MCF 10A (cell line): ENCODE measurements at regions of chr20 and their contacts with region 1.

Region 1: GRCh38 chr20:48620519-48621254 is 207.1 kb downstream of the PREX1 start:
- DNase-seq: peak; percentile 90
- H3K4me3 Mint-ChIP-seq: peak overlapping the region; percentile 67
- H3K27ac Mint-ChIP-seq: peak overlapping the region; percentile 18
- H3K4me1 Mint-ChIP-seq: peaks cover 23% of the 10 kb centered on the region
- H3K27me3 Mint-ChIP-seq: no peaks in the 10 kb centered on the region
- CTCF ChIP-seq: peak; percentile 94

Region 2: GRCh38 chr20:47677635-47678453 is 942.8 kb before region 1 on chr20:
- CTCF ChIA-PET with region 1: interaction called, 97 read pairs
- POLR2A ChIA-PET with region 1: interaction called, 4 read pairs
- intact Hi-C with region 1: loop called (anchors 1 kb)
- DNase-seq: peak; percentile 60
- H3K4me3 Mint-ChIP-seq: no peak overlapping the region
- H3K27ac Mint-ChIP-seq: no peak overlapping the region
- H3K4me1 Mint-ChIP-seq: no peaks in the 10 kb centered on the region
- H3K27me3 Mint-ChIP-seq: no peaks in the 10 kb centered on the region
- CTCF ChIP-seq: peak; percentile 95

Region 3: DNA sequence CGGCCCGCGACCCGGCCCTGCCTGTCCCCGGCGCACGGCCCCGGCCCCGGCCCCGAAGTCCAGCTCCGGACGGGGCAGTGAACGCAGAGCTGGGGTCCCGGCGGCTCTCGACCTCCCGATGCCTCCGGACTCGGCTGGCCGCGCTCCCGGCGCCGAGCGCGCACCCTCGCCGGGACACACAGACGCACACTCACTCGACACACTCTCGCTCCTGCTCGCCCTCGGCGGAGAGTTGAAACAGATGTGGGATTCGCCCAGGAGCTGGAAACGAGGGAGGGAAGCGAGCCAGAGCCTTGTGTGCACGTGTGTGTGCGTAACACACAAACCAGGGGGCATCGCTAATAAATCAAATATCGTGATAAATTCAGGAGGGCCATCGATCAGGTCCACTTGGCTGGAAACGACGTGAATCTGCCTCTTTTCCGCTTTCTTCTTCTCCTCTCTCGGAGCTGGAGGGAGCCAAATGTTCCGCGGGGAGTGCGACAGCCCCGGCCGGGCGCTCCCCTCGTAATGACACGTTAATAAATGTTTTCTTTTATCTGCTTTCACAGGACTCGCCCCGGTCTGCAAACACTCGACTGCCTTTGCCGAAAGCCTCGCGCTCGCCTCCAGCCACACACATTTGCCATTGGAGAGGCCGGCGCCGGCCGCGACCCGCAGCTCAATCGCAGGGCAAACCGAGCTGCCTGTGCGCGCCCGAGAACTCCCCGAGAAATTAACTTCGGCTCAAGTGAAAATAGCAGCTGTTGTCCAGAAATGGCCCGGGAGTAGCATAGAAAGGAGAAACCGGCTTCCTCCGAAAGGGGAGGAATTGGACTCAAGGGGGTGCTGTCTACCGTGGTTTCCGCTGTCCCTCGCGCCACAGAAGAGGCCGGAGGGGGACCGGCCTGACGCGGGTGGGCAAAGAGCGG is 834.6 kb before region 1 on chr20:
- CTCF ChIA-PET with region 1: interaction called, 61 read pairs
- POLR2A ChIA-PET with region 1: interaction called, 32 read pairs
- intact Hi-C with region 1: loop called (anchors 1 kb)
- DNase-seq: peak; percentile 83
- H3K4me3 Mint-ChIP-seq: peak overlapping the region; percentile 72
- H3K27ac Mint-ChIP-seq: peak overlapping the region; percentile 55
- H3K4me1 Mint-ChIP-seq: peaks cover 52% of the 10 kb centered on the region
- H3K27me3 Mint-ChIP-seq: no peaks in the 10 kb centered on the region
- CTCF ChIP-seq: peak; percentile 92

Region 4: DNA sequence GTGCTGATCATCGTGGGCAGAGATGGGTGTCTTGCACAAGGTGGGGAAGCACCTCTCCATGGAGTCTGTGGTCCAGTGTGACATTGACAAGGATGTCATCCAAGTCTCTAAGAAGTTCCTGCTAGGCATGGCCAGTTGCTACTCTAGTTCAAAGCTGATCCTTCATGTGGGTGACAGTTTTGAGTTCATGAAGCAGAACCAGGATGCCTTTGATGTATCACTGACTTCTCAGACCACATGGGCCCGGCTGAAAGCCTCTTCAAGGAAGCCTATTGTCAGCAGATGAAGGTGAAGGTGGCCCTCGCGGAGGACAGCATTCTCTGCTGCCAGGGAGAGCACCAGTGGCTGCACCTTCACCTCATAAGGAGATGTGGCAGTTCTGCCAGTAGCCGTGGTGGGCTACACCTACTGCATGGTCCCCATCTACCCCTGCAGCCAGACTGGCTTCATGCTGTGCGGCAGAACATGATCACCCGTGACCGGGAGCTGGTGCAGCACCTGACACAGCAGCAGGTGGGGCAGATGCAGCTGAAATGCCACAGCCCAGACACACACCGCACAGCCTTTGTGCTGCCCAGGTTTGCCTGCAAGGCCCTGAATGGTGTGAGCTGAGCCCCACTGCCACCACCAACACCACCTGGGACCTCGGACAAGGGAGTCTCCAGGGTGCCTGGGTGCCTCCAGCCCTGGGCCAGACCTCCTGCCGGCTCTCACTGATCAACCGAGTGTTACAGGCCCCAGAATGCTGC is 760.5 kb before region 1 on chr20:
- CTCF ChIA-PET with region 1: interaction called, 12 read pairs
- POLR2A ChIA-PET with region 1: interaction called, 6 read pairs
- intact Hi-C with region 1: loop called (anchors 2 kb)
- DNase-seq: no peak
- H3K4me3 Mint-ChIP-seq: no peak overlapping the region
- H3K27ac Mint-ChIP-seq: no peak overlapping the region
- H3K4me1 Mint-ChIP-seq: peaks cover 13% of the 10 kb centered on the region
- H3K27me3 Mint-ChIP-seq: no peaks in the 10 kb centered on the region
- CTCF ChIP-seq: no peak

Region 5: DNA sequence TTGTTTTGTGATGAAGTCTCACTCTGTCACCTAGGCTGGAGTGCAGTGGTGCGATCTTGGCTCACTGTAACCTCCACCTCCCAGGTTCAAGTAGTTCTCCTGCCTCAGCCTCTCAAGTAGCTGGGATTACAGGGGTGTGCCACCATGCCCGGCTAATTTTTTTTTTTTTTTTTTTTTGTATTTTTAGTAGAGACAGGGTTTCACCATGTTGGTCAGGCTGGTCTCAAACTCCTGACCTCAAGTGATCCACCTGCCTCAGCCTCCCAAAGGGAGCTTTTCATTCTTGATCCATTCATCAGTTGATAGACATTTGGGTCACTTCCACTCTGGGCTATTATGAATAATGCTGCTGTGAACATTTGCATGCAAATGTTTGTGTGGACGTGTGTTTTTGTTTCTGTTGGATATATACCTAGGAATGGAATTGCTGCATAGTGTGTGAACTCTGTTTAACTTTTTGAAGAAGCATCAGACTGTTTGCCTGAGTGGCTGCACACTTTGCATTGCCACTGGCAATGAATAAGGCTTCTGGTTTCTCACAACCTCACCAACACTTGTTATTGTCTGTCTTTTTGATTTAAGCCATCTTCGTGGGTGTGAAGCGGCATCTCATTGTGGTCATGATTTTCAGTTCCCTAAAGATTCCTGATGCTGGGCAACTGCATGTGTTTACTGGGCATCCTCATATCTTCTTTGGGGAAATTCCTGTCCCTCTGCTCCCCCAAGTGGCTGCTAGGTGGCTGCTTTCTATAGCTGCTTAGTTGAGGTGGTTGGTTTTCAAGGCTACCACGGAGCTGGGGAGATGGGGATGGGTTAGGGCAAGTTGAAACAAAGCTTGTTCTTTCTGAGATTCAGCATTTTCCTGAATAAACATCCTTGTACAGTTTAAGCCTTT is 431.8 kb before region 1 on chr20:
- CTCF ChIA-PET with region 1: interaction called, 11 read pairs
- POLR2A ChIA-PET with region 1: interaction called, 7 read pairs
- intact Hi-C with region 1: loop called (anchors 1 kb)
- DNase-seq: peak; percentile 68
- H3K4me3 Mint-ChIP-seq: no peak overlapping the region
- H3K27ac Mint-ChIP-seq: no peak overlapping the region
- H3K4me1 Mint-ChIP-seq: peaks cover 23% of the 10 kb centered on the region
- H3K27me3 Mint-ChIP-seq: no peaks in the 10 kb centered on the region
- CTCF ChIP-seq: peak; percentile 37

Region 6: DNA sequence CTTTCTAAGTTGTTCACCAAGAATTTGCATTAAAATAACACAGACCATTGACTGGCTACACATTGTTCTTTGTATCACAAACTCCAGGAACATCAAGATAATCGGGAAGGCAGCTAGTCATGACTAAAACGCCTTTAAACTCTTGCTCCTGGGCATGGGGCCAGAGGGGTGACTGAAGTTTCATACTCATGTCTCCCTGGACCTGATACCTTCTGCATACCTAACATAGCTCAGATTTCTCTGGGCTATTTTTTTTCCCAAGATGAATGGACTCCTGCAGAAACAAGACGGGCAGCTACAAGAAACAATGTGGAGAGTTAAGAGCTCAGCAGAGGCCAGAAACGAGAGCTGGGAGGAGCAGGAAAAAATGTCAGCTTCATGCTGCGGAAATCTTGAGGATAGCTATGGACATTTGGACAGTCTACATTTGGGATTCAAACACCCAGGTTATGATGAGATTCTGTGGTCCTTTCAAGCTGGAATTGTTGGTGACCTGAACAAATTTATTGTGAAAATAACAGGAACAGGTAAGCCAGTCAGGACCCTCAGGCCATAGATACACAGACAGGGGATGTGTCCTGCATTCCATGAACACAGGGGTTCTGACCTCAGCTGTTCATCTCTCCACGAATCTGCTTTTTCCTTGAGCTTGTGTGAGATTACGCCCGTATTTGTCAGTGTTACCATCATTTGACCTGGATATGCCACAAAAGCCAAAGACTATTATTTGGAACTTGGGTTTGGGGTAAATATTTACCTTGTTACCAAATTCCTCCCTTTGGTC is 82.1 kb before region 1 on chr20:
- CTCF ChIA-PET with region 1: interaction called, 13 read pairs
- POLR2A ChIA-PET with region 1: interaction called, 3 read pairs
- intact Hi-C with region 1: no loop called
- DNase-seq: peak; percentile 71
- H3K4me3 Mint-ChIP-seq: no peak overlapping the region
- H3K27ac Mint-ChIP-seq: no peak overlapping the region
- H3K4me1 Mint-ChIP-seq: peaks cover 10% of the 10 kb centered on the region
- H3K27me3 Mint-ChIP-seq: peaks cover 32% of the 10 kb centered on the region
- CTCF ChIP-seq: no peak

Region 7: GRCh38 chr20:48912065-48912762 is 291.5 kb after region 1 on chr20:
- CTCF ChIA-PET with region 1: no interaction called
- POLR2A ChIA-PET with region 1: no interaction called
- intact Hi-C with region 1: no loop called
- DNase-seq: no peak
- H3K4me3 Mint-ChIP-seq: no peak overlapping the region
- H3K27ac Mint-ChIP-seq: no peak overlapping the region
- H3K4me1 Mint-ChIP-seq: no peaks in the 10 kb centered on the region
- H3K27me3 Mint-ChIP-seq: peaks cover 58% of the 10 kb centered on the region
- CTCF ChIP-seq: no peak